ENCODE measurements at regions of chr3 and their contacts with region 1.

Region 1: GRCh38 chr3:165805946-165806561 is 31.2 kb downstream of the BCHE start:
- DNase-seq: no peak
- H3K4me3 ChIP-seq: peak overlapping the region; percentile 30; the same call in 1 of the 2 replicates
- H3K27ac ChIP-seq: no peak overlapping the region
- H3K4me1 ChIP-seq: no peaks in the 10 kb centered on the region
- H3K27me3 ChIP-seq: no peaks in the 10 kb centered on the region
- CTCF ChIP-seq: no peak

Region 2: GRCh38 chr3:164306031-164306430 is 1500.0 kb before region 1 on chr3:
- CTCF ChIA-PET with region 1: no interaction called
- POLR2A ChIA-PET with region 1: no interaction called
- intact Hi-C with region 1: loop called (anchors 10 kb)
- DNase-seq: no peak
- H3K4me3 ChIP-seq: no peak overlapping the region
- H3K27ac ChIP-seq: no peak overlapping the region
- H3K4me1 ChIP-seq: no peaks in the 10 kb centered on the region
- H3K27me3 ChIP-seq: no peaks in the 10 kb centered on the region
- CTCF ChIP-seq: no peak

Region 3: DNA sequence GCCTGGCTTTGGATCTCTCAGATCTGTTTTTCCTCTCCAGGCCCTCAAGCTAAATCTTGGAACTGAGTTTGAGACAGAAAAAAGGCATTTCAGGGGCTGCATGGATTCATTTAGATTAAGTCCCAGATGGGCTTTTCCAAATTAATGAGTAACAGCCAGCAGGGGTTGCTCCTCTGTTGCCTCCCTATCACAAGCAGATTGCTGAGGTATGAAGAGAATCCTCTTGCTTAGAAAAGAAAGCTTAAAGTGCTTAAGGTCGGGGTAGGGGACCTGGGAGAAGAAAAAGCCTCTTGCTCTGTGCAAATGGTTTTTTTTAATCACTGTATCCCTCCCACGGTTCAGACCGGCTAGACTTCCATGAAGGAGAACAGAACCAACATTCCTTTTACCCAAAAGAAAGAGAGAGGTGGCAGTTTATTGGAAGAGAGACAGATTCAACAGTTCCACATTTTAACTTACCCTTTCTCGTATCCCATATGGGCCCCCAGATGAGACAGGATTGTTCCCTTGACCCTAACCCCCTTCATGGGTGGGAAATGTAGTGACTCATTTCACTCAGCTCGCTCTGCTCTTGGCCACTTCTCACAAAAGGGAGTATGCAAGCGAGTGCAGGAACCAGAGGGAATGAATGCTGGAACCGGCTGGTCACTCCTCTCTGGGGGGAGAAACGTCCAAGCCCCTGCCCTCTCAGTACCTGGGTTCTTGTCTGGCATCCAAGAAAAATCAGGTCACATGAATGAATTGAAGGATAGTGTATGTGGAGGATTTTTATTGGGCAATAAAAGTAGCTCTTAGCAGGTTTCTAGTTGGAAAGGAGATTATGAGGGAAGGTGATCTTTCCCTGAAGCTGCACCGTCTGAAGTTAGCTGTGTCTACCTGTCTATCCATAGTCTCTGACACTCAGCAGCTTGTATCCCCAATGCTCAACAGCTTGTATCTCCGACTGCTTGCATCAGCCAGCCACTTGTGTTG is 1472.9 kb before region 1 on chr3:
- CTCF ChIA-PET with region 1: no interaction called
- POLR2A ChIA-PET with region 1: no interaction called
- intact Hi-C with region 1: no loop called
- DNase-seq: no peak
- H3K4me3 ChIP-seq: no peak overlapping the region
- H3K27ac ChIP-seq: no peak overlapping the region
- H3K4me1 ChIP-seq: no peaks in the 10 kb centered on the region
- H3K27me3 ChIP-seq: no peaks in the 10 kb centered on the region
- CTCF ChIP-seq: no peak

Region 4: GRCh38 chr3:165359005-165359404 is 447.0 kb before region 1 on chr3:
- CTCF ChIA-PET with region 1: no interaction called
- POLR2A ChIA-PET with region 1: interaction called, 21 read pairs
- intact Hi-C with region 1: no loop called
- DNase-seq: no peak
- H3K4me3 ChIP-seq: no peak overlapping the region
- H3K27ac ChIP-seq: no peak overlapping the region
- H3K4me1 ChIP-seq: no peaks in the 10 kb centered on the region
- H3K27me3 ChIP-seq: no peaks in the 10 kb centered on the region
- CTCF ChIP-seq: no peak

Region 5: GRCh38 chr3:165653130-165653778 is 152.8 kb before region 1 on chr3:
- CTCF ChIA-PET with region 1: no interaction called
- POLR2A ChIA-PET with region 1: no interaction called
- intact Hi-C with region 1: no loop called
- DNase-seq: no peak
- H3K4me3 ChIP-seq: no peak overlapping the region
- H3K27ac ChIP-seq: no peak overlapping the region
- H3K4me1 ChIP-seq: no peaks in the 10 kb centered on the region
- H3K27me3 ChIP-seq: no peaks in the 10 kb centered on the region
- CTCF ChIP-seq: no peak

Region 6: GRCh38 chr3:165742351-165742750 is 63.7 kb before region 1 on chr3:
- CTCF ChIA-PET with region 1: no interaction called
- POLR2A ChIA-PET with region 1: no interaction called
- intact Hi-C with region 1: no loop called
- DNase-seq: peak in 1 of 2 experiments; percentile 11
- H3K4me3 ChIP-seq: no peak overlapping the region
- H3K27ac ChIP-seq: no peak overlapping the region
- H3K4me1 ChIP-seq: no peaks in the 10 kb centered on the region
- H3K27me3 ChIP-seq: no peaks in the 10 kb centered on the region
- CTCF ChIP-seq: no peak

Measured in PC-9 (cell line).